Upper lobe of right lung (tissue), 1 donor: ENCODE measurements at regions of chr2 and their contacts with region 1.

Region 1: GRCh38 chr2:218357236-218358159 is 841 bp downstream of the CATIP start:
- DNase-seq: no peak
- ATAC-seq: no peak
- H3K4me3 ChIP-seq: no peak overlapping the region
- H3K27ac ChIP-seq: peak overlapping the region; percentile 66
- H3K4me1 ChIP-seq: no peaks in the 10 kb centered on the region
- H3K27me3 ChIP-seq: no peaks in the 10 kb centered on the region
- CTCF ChIP-seq: no peak

Region 2: DNA sequence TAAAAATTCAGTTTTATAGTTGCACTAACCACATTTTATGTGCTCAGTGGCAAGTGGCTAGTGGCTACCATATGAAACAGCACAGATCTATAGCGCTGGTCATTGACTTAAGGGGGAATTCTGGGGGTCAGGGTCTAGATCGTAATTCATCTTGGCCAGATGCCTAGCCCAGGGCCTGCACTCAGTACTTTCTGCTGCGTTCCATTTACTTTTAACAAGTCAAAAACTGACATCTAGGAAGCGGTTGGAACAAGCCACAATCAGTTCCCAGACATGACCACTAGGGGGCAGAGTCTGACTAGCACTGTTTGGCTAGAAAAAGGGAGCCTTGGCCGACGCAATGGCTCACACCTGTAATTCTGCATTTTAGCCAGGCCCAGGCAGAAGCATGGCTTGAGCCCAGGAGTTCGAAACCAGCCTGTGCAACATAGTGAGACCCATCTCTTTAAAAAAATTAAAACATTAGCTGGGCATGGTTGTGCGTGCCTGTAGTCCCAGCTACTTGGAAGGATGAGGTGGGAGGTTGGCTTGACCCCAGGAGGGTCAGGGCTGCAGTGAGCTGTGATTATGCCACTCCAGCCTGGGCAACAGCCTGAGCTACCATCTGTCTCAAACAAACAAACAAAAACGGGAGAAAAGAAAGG is 56.2 kb before region 1 on chr2:
- intact Hi-C with region 1: loop called (anchors 10 kb)
- DNase-seq: peak; percentile 82
- ATAC-seq: peak; percentile 93
- H3K4me3 ChIP-seq: no peak overlapping the region
- H3K27ac ChIP-seq: no peak overlapping the region
- H3K4me1 ChIP-seq: no peaks in the 10 kb centered on the region
- H3K27me3 ChIP-seq: no peaks in the 10 kb centered on the region
- CTCF ChIP-seq: peak; percentile 98

Region 3: GRCh38 chr2:218476676-218477075 is 119.2 kb after region 1 on chr2:
- intact Hi-C with region 1: no loop called
- DNase-seq: no peak
- ATAC-seq: no peak
- H3K4me3 ChIP-seq: no peak overlapping the region
- H3K27ac ChIP-seq: no peak overlapping the region
- H3K4me1 ChIP-seq: peaks cover 4% of the 10 kb centered on the region
- H3K27me3 ChIP-seq: no peaks in the 10 kb centered on the region
- CTCF ChIP-seq: no peak

Region 4: GRCh38 chr2:218710687-218711549 is 353.4 kb after region 1 on chr2 and contains the start of gene TTLL4:
- intact Hi-C with region 1: no loop called
- DNase-seq: peak; percentile 100
- ATAC-seq: peak; percentile 99
- H3K4me3 ChIP-seq: peak within 1 kb of the TSS; percentile 94
- H3K27ac ChIP-seq: peak within 1 kb of the TSS; percentile 89
- H3K4me1 ChIP-seq: peaks cover 13% of the 10 kb centered on the region
- H3K27me3 ChIP-seq: no peaks in the 10 kb centered on the region
- CTCF ChIP-seq: peak; percentile 92
- total RNA-seq, gene TTLL4: 29.5 TPM